AG04450 (cell line): ENCODE measurements at regions of chr2 and their contacts with region 1.

Region 1: GRCh38 chr2:9142551-9143263 is 63.9 kb upstream of the ASAP2 start:
- DNase-seq: peak; percentile 84
- H3K4me3 ChIP-seq: peak overlapping the region; percentile 37
- H3K27ac ChIP-seq: peak overlapping the region; percentile 81
- H3K27me3 ChIP-seq: no peaks in the 10 kb centered on the region
- CTCF ChIP-seq: peak; percentile 96

Region 2: DNA sequence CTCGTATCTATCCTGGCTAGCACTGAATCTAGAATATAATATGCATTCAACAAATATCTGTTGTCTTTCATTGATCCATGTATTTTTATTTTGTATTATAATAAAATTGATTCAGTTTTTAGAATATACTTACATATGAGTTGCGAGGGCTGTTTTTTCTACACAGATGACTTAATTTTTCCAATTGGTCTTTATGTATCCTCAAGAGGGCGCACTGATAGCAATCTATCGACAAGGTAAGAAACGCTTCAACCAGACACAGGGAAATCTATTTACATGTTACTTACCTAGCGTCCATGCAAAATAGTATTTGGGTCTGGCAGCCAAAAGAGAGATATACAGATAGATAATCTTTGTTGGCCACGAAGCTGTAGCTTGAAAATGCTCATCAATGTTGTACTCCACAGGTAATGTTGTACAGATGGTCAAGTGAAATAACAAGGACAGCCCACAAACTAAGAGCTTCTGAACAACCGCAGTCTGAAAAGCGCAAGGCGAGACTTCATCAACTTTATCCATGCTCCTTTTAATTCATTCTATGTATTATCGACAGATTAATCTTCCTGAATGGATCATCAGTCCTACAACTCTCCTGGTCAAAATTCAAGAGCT is 269.8 kb before region 1 on chr2:
- CTCF ChIA-PET with region 1: interaction called, 61 read pairs
- POLR2A ChIA-PET with region 1: no interaction called
- DNase-seq: peak; percentile 47
- H3K4me3 ChIP-seq: no peak overlapping the region
- H3K27ac ChIP-seq: no peak overlapping the region
- H3K27me3 ChIP-seq: no peaks in the 10 kb centered on the region
- CTCF ChIP-seq: peak; percentile 74

Region 3: DNA sequence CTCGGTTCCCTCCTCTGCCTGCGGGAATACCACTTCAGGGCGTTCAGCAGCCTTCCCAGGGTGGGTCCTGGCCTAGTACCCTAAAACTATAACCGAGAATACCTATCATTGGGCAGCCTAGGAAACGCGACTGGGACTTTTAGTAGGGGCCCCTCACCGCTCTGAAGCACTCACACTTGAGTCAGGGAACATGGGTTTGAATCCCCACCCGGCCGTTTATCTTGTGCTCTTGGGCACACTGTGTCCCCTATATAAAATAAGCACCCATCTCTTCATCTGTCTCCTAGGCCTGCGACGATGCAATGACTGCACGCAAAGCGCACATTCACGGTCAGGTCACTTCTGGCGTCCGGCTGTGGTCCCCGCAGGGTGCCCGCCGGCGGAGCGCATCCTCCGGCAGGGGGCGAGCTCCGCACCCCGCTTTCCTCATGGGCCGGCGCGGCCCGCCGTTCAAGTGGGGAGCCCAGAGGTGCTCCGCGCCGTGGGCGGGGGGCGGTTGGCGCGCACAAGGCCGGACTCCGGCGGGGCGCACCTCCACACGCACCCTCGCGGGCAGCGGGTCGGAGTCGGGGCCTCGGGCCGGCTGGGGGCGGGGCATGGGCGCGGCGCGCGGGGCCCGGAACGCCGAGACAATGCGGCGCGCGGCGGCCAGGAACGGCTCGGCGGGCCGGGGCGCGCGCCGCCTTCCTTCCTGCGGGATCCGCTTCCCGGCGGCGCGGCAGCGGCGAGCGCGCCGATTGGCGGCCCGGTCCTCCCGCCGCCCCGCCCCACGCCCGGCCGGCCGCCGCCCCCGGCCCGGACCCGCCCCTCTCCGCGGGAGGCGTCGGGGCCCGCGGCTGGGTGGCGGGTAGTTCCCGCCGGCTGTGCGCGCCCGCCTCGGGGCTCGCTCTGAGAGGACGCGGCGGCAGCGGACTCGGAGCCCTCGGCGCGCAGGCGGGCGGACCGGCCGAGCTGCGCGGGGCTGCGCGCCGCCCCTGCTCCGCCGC is 63.5 kb after region 1 on chr2 and contains the start of gene ASAP2:
- CTCF ChIA-PET with region 1: interaction called, 14 read pairs
- POLR2A ChIA-PET with region 1: interaction called, 3 read pairs
- DNase-seq: no peak
- H3K4me3 ChIP-seq: peak within 1 kb of the TSS; percentile 81
- H3K27ac ChIP-seq: no peak within 1 kb of the TSS
- H3K27me3 ChIP-seq: no peaks in the 10 kb centered on the region
- CTCF ChIP-seq: peak; percentile 75
- polyA plus RNA-seq, gene ASAP2: 24.6 and 30.0 TPM in 2 replicates

Region 4: GRCh38 chr2:9333591-9334171 is 191.0 kb after region 1 on chr2:
- CTCF ChIA-PET with region 1: interaction called, 23 read pairs
- POLR2A ChIA-PET with region 1: no interaction called
- DNase-seq: peak; percentile 70
- H3K4me3 ChIP-seq: no peak overlapping the region
- H3K27ac ChIP-seq: peak overlapping the region; percentile 33
- H3K27me3 ChIP-seq: no peaks in the 10 kb centered on the region
- CTCF ChIP-seq: peak; percentile 84